SK-N-SH (cell line): ENCODE measurements at regions of chr9 and their contacts with region 1.

Region 1: GRCh38 chr9:112844771-112845542 is 45.7 kb downstream of the SLC46A2 start:
- DNase-seq: peak; percentile 80
- H3K4me3 ChIP-seq: peak overlapping the region in 1 of 2 experiments; percentile 52; a peak in 1 of 4 replicates
- H3K27ac ChIP-seq: no peak overlapping the region
- H3K4me1 ChIP-seq: peaks cover 0 to 7% of the 10 kb centered on the region in 2 experiments; a peak in 1 of 4 replicates
- H3K27me3 ChIP-seq: no peaks in the 10 kb centered on the region
- CTCF ChIP-seq: peak; percentile 99
- EP300 ChIP-seq: no peak
- RAD21 ChIP-seq: peak; percentile 72

Region 2: DNA sequence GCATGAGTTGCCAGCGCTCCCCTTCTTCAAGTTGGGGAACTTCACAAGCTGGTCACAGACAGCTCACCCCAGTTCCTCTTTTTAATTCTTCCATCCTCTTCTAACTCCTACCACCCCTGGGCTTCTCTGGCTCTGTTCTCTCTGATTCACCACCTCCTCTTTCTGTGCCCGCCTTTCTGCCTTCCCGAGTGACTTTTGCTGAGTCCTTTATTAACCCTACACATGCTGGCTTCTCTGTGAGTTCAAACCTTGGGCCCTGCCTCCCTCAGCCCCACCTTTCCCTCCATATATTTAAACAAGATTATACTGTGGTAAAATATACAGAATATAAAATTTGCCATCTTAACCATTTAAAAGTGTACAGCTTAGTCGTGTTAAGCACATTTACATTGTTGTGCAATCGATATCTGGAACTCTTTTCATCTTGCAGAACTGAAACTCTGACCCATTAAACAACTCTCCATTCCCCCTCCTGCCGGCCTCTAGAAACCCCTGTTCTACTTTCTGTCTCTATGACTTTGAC is 13.7 kb after region 1 on chr9:
- CTCF ChIA-PET with region 1: interaction called, 14 read pairs
- POLR2A ChIA-PET with region 1: no interaction called
- DNase-seq: no peak
- H3K4me3 ChIP-seq: no peak overlapping the region
- H3K27ac ChIP-seq: no peak overlapping the region
- H3K4me1 ChIP-seq: no peaks in the 10 kb centered on the region; a peak in 1 of 4 replicates
- H3K27me3 ChIP-seq: no peaks in the 10 kb centered on the region
- CTCF ChIP-seq: no peak
- EP300 ChIP-seq: no peak
- RAD21 ChIP-seq: no peak

Region 3: DNA sequence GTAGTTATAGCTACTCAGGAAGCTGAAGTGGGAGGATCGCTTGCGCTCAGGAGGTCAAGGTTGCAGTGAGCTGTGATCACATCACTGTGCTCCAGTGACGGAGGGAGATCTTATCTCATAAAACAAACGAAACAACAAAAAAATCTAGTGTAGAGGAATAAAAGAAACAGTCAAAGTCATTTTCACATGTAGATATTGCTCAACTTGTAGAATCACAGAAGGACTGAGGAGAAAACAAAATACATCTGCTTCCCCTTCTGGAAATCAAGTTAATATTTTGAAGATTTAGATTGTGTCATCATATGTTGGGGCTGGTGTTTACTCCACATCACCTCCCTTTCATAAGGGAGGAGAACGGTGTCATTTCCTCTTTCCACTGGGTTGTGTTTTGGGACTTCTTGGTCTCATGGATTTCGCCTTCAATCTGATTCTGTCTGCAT is 53.9 kb after region 1 on chr9:
- CTCF ChIA-PET with region 1: interaction called, 20 read pairs
- POLR2A ChIA-PET with region 1: no interaction called
- DNase-seq: no peak
- H3K4me3 ChIP-seq: no peak overlapping the region
- H3K27ac ChIP-seq: no peak overlapping the region
- H3K4me1 ChIP-seq: no peaks in the 10 kb centered on the region
- H3K27me3 ChIP-seq: no peaks in the 10 kb centered on the region
- CTCF ChIP-seq: no peak
- EP300 ChIP-seq: no peak
- RAD21 ChIP-seq: no peak

Region 4: GRCh38 chr9:113238859-113239232 is 393.9 kb after region 1 on chr9:
- CTCF ChIA-PET with region 1: no interaction called
- POLR2A ChIA-PET with region 1: no interaction called
- DNase-seq: no peak
- H3K4me3 ChIP-seq: no peak overlapping the region
- H3K27ac ChIP-seq: no peak overlapping the region
- H3K4me1 ChIP-seq: peaks cover 0 to 6% of the 10 kb centered on the region in 2 experiments; a peak in 3 of 4 replicates
- H3K27me3 ChIP-seq: no peaks in the 10 kb centered on the region
- CTCF ChIP-seq: no peak
- EP300 ChIP-seq: no peak
- RAD21 ChIP-seq: no peak